Pancreas (tissue), 10 donors: ENCODE measurements at regions of chr5 and their contacts with region 1.

Region 1: GRCh38 chr5:67209142-67209771 is 12.7 kb upstream of the CD180 start:
- DNase-seq: peak in 4 of 6 donors; percentile 37 to 72 (median 64)
- ATAC-seq: peak; percentile 92 to 94 (median 93)
- H3K4me3 ChIP-seq: no peak overlapping the region
- H3K27ac ChIP-seq: no peak overlapping the region
- H3K4me1 ChIP-seq: peaks cover 0 to 12% (median 0%) of the 10 kb centered on the region in 3 donors
- H3K27me3 ChIP-seq: no peaks in the 10 kb centered on the region
- CTCF ChIP-seq: peak; percentile 47 to 70 (median 57)

Region 2: GRCh38 chr5:66653325-66653724 is 555.9 kb before region 1 on chr5:
- intact Hi-C with region 1: no loop called
- DNase-seq: no peak
- ATAC-seq: no peak
- H3K4me3 ChIP-seq: no peak overlapping the region
- H3K27ac ChIP-seq: no peak overlapping the region
- H3K4me1 ChIP-seq: peaks cover 0 to 4% (median 0%) of the 10 kb centered on the region in 3 donors
- H3K27me3 ChIP-seq: no peaks in the 10 kb centered on the region
- CTCF ChIP-seq: no peak

Region 3: GRCh38 chr5:66814146-66814991 is 394.9 kb before region 1 on chr5:
- intact Hi-C with region 1: loop called in 1 of 3 experiments (anchors 10 kb)
- DNase-seq: peak in 2 of 6 donors; percentile 14 to 34
- ATAC-seq: peak in 3 of 4 donors; percentile 69 to 79 (median 72)
- H3K4me3 ChIP-seq: no peak overlapping the region
- H3K27ac ChIP-seq: no peak overlapping the region
- H3K4me1 ChIP-seq: no peaks in the 10 kb centered on the region
- H3K27me3 ChIP-seq: no peaks in the 10 kb centered on the region
- CTCF ChIP-seq: peak; percentile 30 to 69 (median 54)

Region 4: DNA sequence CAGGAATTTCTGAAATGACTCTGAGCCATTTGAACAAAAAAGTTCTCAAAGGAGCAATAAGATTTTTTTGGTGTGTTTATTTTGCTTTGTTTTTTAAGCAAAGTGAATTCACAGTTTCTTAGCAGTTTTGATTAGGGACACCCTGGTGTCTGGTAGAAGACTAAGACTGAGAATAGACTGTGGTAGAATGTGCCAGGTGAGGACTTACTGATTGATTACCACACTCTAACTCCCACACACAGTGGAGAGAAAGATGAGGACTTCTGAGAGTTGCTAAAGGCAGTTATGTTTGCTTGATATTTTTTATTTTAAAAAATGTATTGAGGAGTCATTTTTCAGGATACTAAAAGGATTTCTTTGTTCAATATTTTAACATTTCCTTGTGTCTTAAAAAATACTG is 187.7 kb before region 1 on chr5:
- intact Hi-C with region 1: no loop called
- DNase-seq: no peak
- ATAC-seq: no peak
- H3K4me3 ChIP-seq: no peak overlapping the region
- H3K27ac ChIP-seq: no peak overlapping the region
- H3K4me1 ChIP-seq: peaks cover 0 to 12% (median 0%) of the 10 kb centered on the region in 3 donors
- H3K27me3 ChIP-seq: no peaks in the 10 kb centered on the region
- CTCF ChIP-seq: no peak

Region 5: DNA sequence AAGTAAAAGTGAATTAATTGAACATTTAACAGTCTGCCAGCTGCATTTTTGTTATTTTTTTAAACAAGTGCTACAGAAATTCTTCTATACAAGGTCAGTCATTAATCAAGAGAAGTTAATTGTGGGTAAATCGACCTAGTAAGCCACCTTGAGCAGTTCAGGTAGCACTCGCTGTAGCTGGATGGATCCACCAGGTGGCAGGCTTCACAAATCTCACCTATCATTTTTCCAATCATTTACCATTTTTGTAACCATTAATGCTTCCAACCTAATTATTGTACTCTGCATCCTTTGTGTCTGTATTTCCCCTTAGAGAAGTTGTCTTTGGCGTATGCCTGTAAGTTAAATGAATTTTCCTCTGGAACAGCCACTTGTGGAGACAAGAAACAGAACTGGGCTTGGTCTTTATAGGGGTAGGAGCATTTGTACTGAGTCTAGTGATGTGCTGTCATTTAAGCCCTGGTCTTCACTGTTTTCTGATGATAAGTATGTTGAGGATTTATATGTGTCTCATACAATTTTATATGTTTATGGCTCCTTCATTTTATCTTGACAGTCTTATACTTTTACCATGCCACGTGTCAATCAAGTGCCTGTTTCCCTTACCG is 52.2 kb before region 1 on chr5:
- intact Hi-C with region 1: loop called in 1 of 3 experiments (anchors 10 kb)
- DNase-seq: peak in 1 of 6 donors; percentile 41
- ATAC-seq: peak; percentile 70 to 86 (median 80)
- H3K4me3 ChIP-seq: no peak overlapping the region
- H3K27ac ChIP-seq: no peak overlapping the region
- H3K4me1 ChIP-seq: peaks cover 0 to 5% (median 5%) of the 10 kb centered on the region in 3 donors
- H3K27me3 ChIP-seq: no peaks in the 10 kb centered on the region
- CTCF ChIP-seq: peak; percentile 54 to 73 (median 66)

Region 6: DNA sequence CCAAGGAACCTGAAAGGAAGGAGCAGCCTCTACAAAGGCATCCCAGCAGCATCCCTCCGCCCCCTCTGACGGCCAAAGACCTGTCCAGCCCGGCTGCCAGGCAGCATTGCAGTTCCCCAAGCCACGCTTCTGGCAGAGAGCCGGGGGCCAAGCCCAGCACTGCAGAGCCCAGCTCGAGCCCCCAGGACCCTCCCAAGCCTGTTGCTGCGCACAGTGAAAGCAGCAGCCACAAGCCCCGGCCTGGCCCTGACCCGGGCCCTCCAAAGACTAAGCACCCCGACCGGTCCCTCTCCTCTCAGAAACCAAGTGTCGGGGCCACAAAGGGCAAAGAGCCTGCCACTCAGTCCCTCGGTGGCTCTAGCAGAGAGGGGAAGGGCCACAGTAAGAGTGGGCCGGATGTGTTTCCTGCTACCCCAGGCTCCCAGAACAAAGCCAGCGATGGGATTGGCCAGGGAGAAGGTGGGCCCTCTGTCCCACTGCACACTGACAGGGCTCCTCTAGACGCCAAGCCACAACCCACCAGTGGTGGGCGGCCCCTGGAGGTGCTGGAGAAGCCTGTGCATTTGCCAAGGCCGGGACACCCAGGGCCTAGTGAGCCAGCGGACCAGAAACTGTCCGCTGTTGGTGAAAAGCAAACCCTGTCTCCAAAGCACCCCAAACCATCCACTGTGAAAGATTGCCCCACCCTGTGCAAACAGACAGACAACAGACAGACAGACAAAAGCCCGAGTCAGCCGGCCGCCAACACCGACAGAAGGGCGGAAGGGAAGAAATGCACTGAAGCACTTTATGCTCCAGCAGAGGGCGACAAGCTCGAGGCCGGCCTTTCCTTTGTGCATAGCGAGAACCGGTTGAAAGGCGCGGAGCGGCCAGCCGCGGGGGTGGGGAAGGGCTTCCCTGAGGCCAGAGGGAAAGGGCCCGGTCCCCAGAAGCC is 43.5 kb before region 1 on chr5:
- intact Hi-C with region 1: loop called in 1 of 3 experiments (anchors 5 kb)
- DNase-seq: peak; percentile 66 to 90 (median 79)
- ATAC-seq: peak; percentile 90 to 96 (median 94)
- H3K4me3 ChIP-seq: peak overlapping the region in 2 of 4 donors; percentile 22 to 36
- H3K27ac ChIP-seq: peak overlapping the region in 2 of 4 donors; percentile 66 to 68
- H3K4me1 ChIP-seq: peaks cover 0 to 3% (median 2%) of the 10 kb centered on the region in 3 donors
- H3K27me3 ChIP-seq: no peaks in the 10 kb centered on the region
- CTCF ChIP-seq: peak; percentile 34 to 53 (median 45)